Dendritic cell treated with granulocyte-macrophage colony-stimulating factor and Interleukin-4, amounts not matched to agents 40 ng/mL and 50 ng/mL, for 4 days (primary cell): ENCODE measurements at regions of chr2 and their contacts with region 1.

Region 1: GRCh38 chr2:33583194-33583938 is 15.7 kb downstream of the FAM98A start:
- H3K4me3 Mint-ChIP-seq: no peak overlapping the region
- H3K27ac Mint-ChIP-seq: no peak overlapping the region
- H3K4me1 Mint-ChIP-seq: peaks cover 25% of the 10 kb centered on the region
- H3K27me3 Mint-ChIP-seq: no peaks in the 10 kb centered on the region

Region 2: DNA sequence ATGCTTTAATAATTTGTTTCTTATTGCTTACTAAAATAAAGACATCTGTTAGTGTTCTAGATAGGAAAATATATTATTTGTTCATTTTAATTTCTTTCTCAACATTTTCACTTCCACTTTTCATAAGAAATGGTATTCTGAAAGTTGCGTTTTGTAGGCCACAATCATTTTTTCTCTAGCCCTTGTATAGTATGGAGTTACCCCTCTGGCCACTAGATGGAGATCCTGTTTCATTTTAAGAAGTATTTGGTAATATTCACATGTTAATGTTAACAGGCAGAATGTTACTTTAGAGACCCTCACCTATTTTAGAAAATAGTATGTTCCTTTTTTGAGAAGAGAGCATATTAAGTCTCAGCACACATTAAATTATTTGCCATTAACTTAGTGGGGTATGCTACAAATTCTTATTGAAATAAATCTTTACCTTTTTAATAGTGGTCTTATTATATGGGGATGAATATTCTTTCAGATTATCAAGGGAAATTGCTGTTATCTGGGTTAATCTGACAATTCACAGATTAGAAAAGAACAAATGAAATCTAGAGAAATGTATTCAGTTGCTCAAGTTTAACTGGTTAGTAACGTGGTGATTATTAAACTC is 1029.4 kb before region 1 on chr2:
- intact Hi-C with region 1: loop called (anchors 5 kb)
- H3K4me3 Mint-ChIP-seq: no peak overlapping the region
- H3K27ac Mint-ChIP-seq: no peak overlapping the region
- H3K4me1 Mint-ChIP-seq: no peaks in the 10 kb centered on the region
- H3K27me3 Mint-ChIP-seq: no peaks in the 10 kb centered on the region

Region 3: DNA sequence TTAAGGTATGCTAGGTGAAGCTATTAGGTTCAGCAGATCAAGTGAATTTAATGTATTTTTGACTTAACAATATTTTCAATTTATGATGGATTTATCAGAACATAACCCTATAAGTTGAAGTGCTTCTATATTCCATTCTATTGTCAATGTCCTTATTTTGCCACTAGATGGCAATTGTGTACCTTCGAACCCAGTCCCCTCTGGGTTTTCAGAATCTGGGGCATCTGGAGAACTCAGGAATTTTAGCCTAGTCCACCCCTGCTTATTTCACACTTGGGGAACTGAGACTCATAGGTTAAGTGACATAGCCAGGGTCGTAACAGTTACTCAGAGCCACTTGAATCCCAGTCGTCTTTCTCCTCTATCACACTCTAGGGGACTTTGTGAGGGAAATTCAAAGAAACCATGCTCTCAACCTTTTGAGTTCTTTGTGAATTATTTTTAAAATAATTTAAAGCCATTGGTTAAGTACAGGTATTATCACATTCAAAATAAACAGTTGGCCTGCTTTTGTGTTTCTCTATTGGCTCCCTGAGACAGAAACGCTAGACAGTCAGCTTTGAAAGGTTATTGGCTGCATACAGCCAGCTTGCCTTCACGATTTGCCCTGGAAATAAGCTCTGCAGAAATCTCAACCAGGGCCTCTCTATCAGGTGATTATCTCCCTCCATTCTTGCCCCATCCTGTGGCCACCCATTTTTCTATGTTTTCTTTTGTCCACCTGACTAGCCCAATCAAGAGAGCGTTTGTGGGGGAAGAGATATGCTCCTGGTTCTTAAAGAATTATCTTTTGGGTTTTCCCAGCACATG is 810.5 kb before region 1 on chr2:
- intact Hi-C with region 1: loop called (anchors 2 kb)
- H3K4me3 Mint-ChIP-seq: no peak overlapping the region
- H3K27ac Mint-ChIP-seq: no peak overlapping the region
- H3K4me1 Mint-ChIP-seq: no peaks in the 10 kb centered on the region
- H3K27me3 Mint-ChIP-seq: no peaks in the 10 kb centered on the region

Region 4: GRCh38 chr2:33441235-33441810 is 142.0 kb before region 1 on chr2:
- intact Hi-C with region 1: no loop called
- H3K4me3 Mint-ChIP-seq: no peak overlapping the region
- H3K27ac Mint-ChIP-seq: no peak overlapping the region
- H3K4me1 Mint-ChIP-seq: no peaks in the 10 kb centered on the region
- H3K27me3 Mint-ChIP-seq: no peaks in the 10 kb centered on the region

Region 5: GRCh38 chr2:33475224-33476130 is 107.9 kb before region 1 on chr2:
- intact Hi-C with region 1: loop called (anchors 1 kb)
- H3K4me3 Mint-ChIP-seq: peak overlapping the region; percentile 80
- H3K27ac Mint-ChIP-seq: peak overlapping the region; percentile 95
- H3K4me1 Mint-ChIP-seq: peaks cover 29% of the 10 kb centered on the region
- H3K27me3 Mint-ChIP-seq: no peaks in the 10 kb centered on the region

Region 6: DNA sequence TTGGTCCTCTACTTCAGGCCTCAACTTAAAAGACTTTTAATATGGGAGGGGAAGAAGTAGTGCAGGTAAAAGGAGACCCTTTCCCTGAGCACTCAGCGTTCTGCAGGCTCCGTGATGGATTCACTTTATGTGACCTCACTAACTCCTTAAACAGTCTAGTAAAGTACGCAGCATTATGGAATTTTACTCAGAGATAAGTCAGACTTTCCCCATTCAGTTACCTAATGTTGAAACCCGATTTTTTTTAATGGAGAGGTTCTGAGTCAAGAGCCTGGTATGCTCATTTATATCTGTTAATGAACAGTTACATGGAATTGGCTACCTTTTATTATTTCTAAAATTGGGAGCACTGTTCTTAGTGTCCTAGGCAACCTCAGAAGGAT is 72.8 kb before region 1 on chr2:
- intact Hi-C with region 1: no loop called
- H3K4me3 Mint-ChIP-seq: no peak overlapping the region
- H3K27ac Mint-ChIP-seq: no peak overlapping the region
- H3K4me1 Mint-ChIP-seq: peaks cover 10% of the 10 kb centered on the region
- H3K27me3 Mint-ChIP-seq: no peaks in the 10 kb centered on the region

Region 7: DNA sequence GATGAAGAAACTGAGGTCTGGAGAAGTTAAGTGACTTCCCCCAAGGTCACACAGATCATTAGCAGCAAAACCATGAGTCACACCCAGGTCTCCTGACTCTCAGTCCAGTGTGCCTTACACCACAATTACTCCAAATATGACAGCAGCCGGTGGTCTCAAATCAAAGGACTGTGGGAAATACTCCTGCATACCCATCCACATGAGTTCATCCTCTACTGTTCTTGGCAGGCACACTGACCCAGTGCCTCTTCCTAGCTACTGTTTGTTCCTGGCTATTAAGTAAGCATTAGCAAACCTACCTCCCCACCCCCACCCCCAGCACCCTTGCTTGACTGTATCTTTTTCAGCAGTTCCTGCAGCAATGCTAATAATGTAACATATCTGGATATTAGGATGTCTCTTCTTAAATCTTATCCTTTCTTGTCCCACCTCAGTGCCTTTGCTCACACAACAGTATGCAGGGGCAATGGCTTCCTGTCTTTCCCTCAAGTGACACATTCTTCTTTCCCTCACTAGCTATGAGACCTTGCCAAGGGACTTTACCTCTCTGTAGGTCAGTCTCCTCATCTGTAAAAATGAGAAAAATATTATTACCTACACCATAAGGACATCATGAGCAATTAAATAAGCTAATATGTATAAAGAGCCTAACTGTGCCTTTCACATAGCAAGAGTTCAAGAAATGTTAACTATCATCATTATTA is 30.5 kb before region 1 on chr2:
- intact Hi-C with region 1: loop called (anchors 1 kb)
- H3K4me3 Mint-ChIP-seq: no peak overlapping the region
- H3K27ac Mint-ChIP-seq: peak overlapping the region; percentile 81
- H3K4me1 Mint-ChIP-seq: peaks cover 45% of the 10 kb centered on the region
- H3K27me3 Mint-ChIP-seq: no peaks in the 10 kb centered on the region